Gastrocnemius medialis (tissue), 4 donors: ENCODE measurements at regions of chr6 and their contacts with region 1.

Region 1: DNA sequence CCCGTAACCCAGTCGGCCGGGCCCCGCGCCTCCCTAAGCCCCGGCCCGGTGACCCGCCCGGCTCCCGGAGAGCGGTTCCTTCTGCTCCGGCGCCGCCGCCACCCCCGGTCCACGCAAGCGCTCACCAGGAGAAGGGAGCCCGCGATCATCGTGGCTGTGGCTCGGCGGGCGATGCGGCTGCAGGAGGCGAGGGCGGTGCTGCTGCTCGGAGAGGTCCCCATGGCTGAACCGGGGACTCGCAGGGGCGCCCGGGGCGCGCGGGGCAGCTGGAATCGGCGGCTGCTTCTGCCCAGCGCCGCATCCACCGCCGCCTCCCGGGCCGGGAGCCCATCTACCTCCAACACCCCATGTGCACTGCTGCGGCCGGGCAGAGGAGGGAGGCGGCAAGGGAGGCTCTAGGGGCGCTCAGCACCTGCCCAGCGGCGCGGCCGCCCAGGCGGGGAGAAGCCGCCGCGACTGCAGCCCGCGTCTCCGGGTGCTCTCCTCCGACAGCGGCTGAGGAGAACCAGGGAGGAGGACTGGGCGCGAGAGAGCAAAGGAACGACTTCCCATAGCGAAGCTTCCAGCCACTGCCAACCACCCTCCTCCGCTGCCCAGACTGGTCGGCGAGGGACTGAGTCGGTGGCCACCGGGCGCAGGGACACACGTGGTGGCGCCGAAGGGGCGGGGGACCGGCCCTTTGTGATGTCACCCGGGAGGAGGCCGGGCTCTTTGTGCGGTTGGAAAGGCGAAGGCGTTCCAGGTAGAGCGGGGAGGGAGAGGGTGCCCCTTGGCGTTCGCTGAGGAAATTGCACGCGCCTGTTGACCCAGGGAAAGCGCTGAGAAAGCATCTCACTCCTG is at the start of gene TNFRSF21:
- DNase-seq: peak; percentile 85 to 87
- ATAC-seq: peak; percentile 93 to 96
- H3K4me3 ChIP-seq: peak within 1 kb of the TSS; percentile 62 to 81 (median 70)
- H3K27ac ChIP-seq: peak within 1 kb of the TSS; percentile 49 to 73 (median 69)
- H3K4me1 ChIP-seq: peaks cover 4 to 10% of the 10 kb centered on the region in 2 donors
- H3K27me3 ChIP-seq: peaks cover 11 to 24% (median 24%) of the 10 kb centered on the region in 3 donors
- CTCF ChIP-seq: peak; percentile 85 to 95 (median 89)
- POLR2A ChIP-seq: peak; percentile 57 to 83
- total RNA-seq, gene TNFRSF21: 2.8 to 5.3 (median 3.7) TPM

Region 2: DNA sequence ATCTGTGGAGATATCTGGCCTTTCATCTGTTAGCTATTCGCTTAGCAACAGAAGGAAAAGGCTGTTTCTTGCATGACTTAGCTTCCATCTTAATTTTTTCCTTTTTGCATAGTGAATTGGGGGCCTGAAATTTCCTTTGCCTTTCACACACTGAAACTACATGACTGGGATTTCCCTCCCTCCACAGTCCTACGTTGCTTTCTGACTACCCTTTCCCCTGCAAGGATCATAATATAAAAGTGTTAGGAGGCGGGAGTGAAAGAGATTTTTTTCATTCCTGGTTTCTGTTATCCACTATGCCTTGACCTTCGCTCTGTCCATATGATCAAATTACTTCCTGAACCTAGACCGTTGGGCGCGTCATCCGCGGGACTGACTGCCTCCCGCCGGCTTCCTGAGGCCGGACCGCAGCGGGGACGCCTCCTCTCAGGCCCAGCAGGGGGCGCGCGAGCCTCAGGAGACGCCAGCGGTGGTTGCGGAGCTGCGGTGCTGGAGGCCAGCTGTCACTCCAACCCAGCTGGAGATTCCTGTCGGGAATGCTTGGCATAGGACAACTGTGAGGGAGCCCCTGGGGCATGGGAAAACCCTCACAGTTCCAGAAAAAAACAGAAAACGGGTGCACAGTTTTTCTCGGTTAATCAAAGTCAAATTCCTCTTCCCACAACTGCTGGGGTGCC is 460.7 kb before region 1 on chr6:
- in situ Hi-C with region 1: loop called (anchors 10 to 25 kb)
- intact Hi-C with region 1: loop called (anchors 2 kb)
- DNase-seq: peak; percentile 50 to 59
- ATAC-seq: peak; percentile 64 to 85
- H3K4me3 ChIP-seq: peak overlapping the region in 1 of 4 donors; percentile 14
- H3K27ac ChIP-seq: no peak overlapping the region
- H3K4me1 ChIP-seq: peaks cover 3 to 20% of the 10 kb centered on the region in 2 donors
- H3K27me3 ChIP-seq: no peaks in the 10 kb centered on the region
- CTCF ChIP-seq: peak; percentile 86 to 96 (median 88)
- POLR2A ChIP-seq: no peak

Region 3: GRCh38 chr6:46862381-46862780 is 447.1 kb before region 1 on chr6:
- in situ Hi-C with region 1: loop called in 1 of 4 experiments (anchors 25 kb)
- intact Hi-C with region 1: no loop called
- DNase-seq: no peak
- ATAC-seq: no peak
- H3K4me3 ChIP-seq: no peak overlapping the region
- H3K27ac ChIP-seq: no peak overlapping the region
- H3K4me1 ChIP-seq: no peaks in the 10 kb centered on the region
- H3K27me3 ChIP-seq: no peaks in the 10 kb centered on the region
- CTCF ChIP-seq: no peak
- POLR2A ChIP-seq: no peak

Region 4: DNA sequence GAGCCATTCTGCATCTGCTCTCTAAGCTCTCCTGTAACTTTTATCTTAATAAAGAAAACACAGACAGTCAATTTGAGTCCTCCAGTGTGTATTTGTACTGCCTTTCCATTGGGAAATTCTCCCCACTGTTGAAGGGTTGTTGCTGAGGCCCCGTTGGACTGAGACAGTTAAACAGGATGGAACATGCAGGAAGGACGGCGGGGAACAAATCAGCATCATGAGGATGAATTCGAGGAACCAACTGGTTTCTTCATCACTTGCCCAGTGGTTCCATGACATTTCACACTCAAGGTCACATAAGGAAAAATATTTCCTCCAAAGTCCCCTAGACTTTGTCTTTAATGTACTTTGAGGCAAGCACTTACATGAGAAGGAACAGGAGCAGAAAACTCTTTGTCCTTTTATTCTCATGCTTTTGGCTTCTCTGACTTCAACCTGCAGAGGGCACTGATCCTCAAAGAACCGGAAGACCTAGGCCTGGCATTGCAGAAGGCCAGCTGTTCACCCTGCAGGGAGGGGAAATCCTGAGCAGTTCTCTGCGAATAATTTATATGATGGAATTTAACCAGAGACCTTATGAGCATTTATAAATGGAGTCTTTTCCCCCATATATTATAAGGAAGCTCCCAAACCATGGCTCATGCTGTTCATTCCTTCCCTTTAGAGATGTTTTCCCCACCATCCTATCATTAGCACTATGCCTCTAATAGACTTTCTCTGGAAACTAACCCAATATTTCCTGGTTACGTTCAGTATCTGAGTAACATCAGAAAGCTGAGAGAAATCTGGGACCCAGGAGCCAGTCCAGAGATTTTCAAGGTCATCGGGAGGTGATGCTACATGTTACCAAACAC is 212.2 kb before region 1 on chr6:
- in situ Hi-C with region 1: loop called (anchors 5 to 10 kb)
- intact Hi-C with region 1: loop called (anchors 1 kb)
- DNase-seq: peak; percentile 50 to 58
- ATAC-seq: peak; percentile 78 to 93
- H3K4me3 ChIP-seq: no peak overlapping the region
- H3K27ac ChIP-seq: peak overlapping the region in 1 of 4 donors; percentile 40
- H3K4me1 ChIP-seq: no peaks in the 10 kb centered on the region
- H3K27me3 ChIP-seq: no peaks in the 10 kb centered on the region
- CTCF ChIP-seq: peak; percentile 52 to 65 (median 56)
- POLR2A ChIP-seq: no peak

Region 5: DNA sequence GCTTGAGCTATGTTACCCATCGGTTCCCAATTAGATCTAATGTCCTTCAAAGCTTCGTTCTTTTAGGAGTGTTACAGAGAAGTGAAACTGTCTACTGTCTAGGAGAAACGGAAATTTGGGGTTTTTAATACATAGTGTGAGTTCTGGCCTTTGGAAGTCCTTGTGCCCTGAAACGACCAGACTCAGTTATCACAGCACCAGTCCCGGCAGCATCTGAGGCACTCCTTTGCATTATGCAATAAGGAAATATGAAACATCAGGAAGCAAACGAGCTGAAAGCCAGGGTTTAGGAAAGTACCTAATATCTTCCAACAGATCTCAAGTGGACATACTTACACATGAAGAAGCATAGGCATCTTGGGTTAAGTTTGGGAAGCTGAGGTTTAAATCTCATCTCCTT is 205.6 kb before region 1 on chr6:
- in situ Hi-C with region 1: loop called (anchors 5 to 10 kb)
- intact Hi-C with region 1: no loop called
- DNase-seq: no peak
- ATAC-seq: peak; percentile 54 to 56
- H3K4me3 ChIP-seq: no peak overlapping the region
- H3K27ac ChIP-seq: no peak overlapping the region
- H3K4me1 ChIP-seq: no peaks in the 10 kb centered on the region
- H3K27me3 ChIP-seq: no peaks in the 10 kb centered on the region
- CTCF ChIP-seq: no peak
- POLR2A ChIP-seq: no peak

Region 6: GRCh38 chr6:47242483-47243386 is 66.8 kb before region 1 on chr6:
- in situ Hi-C with region 1: no loop called
- intact Hi-C with region 1: loop called (anchors 5 kb)
- DNase-seq: peak; percentile 56 to 76
- ATAC-seq: peak; percentile 63 to 81
- H3K4me3 ChIP-seq: no peak overlapping the region
- H3K27ac ChIP-seq: peak overlapping the region in 3 of 4 donors; percentile 11 to 37 (median 15)
- H3K4me1 ChIP-seq: peaks cover 15 to 17% of the 10 kb centered on the region in 2 donors
- H3K27me3 ChIP-seq: no peaks in the 10 kb centered on the region
- CTCF ChIP-seq: no peak
- POLR2A ChIP-seq: no peak

Region 7: GRCh38 chr6:47420394-47421371 is 111.2 kb after region 1 on chr6:
- in situ Hi-C with region 1: no loop called
- intact Hi-C with region 1: no loop called
- DNase-seq: no peak
- ATAC-seq: no peak
- H3K4me3 ChIP-seq: no peak overlapping the region
- H3K27ac ChIP-seq: no peak overlapping the region
- H3K4me1 ChIP-seq: no peaks in the 10 kb centered on the region
- H3K27me3 ChIP-seq: no peaks in the 10 kb centered on the region
- CTCF ChIP-seq: no peak
- POLR2A ChIP-seq: no peak